ENCODE measurements at regions of chr6 and their contacts with region 1.

Region 1: GRCh38 chr6:30616811-30617564 is at the start of gene PPP1R10:
- DNase-seq: peak; percentile 100
- H3K4me3 Mint-ChIP-seq: peak within 1 kb of the TSS; percentile 83
- H3K27ac Mint-ChIP-seq: peak within 1 kb of the TSS; percentile 99
- H3K4me1 Mint-ChIP-seq: peaks cover 26% of the 10 kb centered on the region
- H3K27me3 Mint-ChIP-seq: no peaks in the 10 kb centered on the region
- CTCF ChIP-seq: no peak
- total RNA-seq, gene PPP1R10: 103 and 209 TPM in 2 replicates

Region 2: GRCh38 chr6:30295837-30296236 is 321.2 kb before region 1 on chr6:
- CTCF ChIA-PET with region 1: no interaction called
- POLR2A ChIA-PET with region 1: no interaction called
- intact Hi-C with region 1: no loop called
- DNase-seq: no peak
- H3K4me3 Mint-ChIP-seq: no peak overlapping the region
- H3K27ac Mint-ChIP-seq: no peak overlapping the region
- H3K4me1 Mint-ChIP-seq: no peaks in the 10 kb centered on the region
- H3K27me3 Mint-ChIP-seq: no peaks in the 10 kb centered on the region
- CTCF ChIP-seq: no peak

Region 3: GRCh38 chr6:30556066-30556905 is 60.7 kb before region 1 on chr6 and contains the start of gene GNL1:
- CTCF ChIA-PET with region 1: interaction called, 3 read pairs
- POLR2A ChIA-PET with region 1: interaction called, 43 read pairs
- intact Hi-C with region 1: no loop called
- DNase-seq: peak; percentile 94
- H3K4me3 Mint-ChIP-seq: peak within 1 kb of the TSS; percentile 91
- H3K27ac Mint-ChIP-seq: peak within 1 kb of the TSS; percentile 99
- H3K4me1 Mint-ChIP-seq: peaks cover 16% of the 10 kb centered on the region
- H3K27me3 Mint-ChIP-seq: no peaks in the 10 kb centered on the region
- CTCF ChIP-seq: no peak
- total RNA-seq, gene GNL1: 69.1 and 76.8 TPM in 2 replicates

Region 4: DNA sequence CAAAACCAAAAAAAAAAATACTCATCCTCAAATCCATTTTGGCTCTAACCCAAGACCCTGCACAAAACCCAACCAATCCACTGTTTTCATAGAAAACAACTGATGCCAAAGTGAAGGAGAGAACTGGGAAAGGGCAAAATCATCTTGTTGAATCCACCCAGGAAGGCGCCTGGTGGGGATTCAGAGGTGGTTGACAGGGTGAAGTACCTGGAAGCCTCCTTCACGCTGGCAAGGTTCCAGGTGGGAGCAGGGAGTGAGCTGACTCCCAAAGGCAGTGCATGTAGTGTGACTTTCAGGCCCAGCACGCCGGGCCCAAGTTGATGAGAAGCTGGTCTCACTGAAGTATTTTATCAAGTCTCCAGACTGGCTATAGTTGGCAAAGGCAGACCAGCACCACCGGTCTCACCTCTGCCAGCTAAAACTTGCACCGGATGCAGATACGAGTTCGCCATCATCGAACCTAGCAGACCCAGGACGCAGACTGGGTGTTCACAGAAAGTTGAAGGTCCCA is 16.5 kb before region 1 on chr6:
- CTCF ChIA-PET with region 1: interaction called, 14 read pairs
- POLR2A ChIA-PET with region 1: interaction called, 107 read pairs
- intact Hi-C with region 1: no loop called
- DNase-seq: peak; percentile 20
- H3K4me3 Mint-ChIP-seq: no peak overlapping the region
- H3K27ac Mint-ChIP-seq: no peak overlapping the region
- H3K4me1 Mint-ChIP-seq: no peaks in the 10 kb centered on the region
- H3K27me3 Mint-ChIP-seq: no peaks in the 10 kb centered on the region
- CTCF ChIP-seq: no peak

Region 5: GRCh38 chr6:30672445-30673253 is 55.7 kb after region 1 on chr6 and contains the start of gene DHX16:
- CTCF ChIA-PET with region 1: interaction called, 4 read pairs
- POLR2A ChIA-PET with region 1: interaction called, 22 read pairs
- intact Hi-C with region 1: loop called (anchors 2 kb)
- DNase-seq: peak; percentile 99
- H3K4me3 Mint-ChIP-seq: peak within 1 kb of the TSS; percentile 83
- H3K27ac Mint-ChIP-seq: peak within 1 kb of the TSS; percentile 52
- H3K4me1 Mint-ChIP-seq: peaks cover 12% of the 10 kb centered on the region
- H3K27me3 Mint-ChIP-seq: no peaks in the 10 kb centered on the region
- CTCF ChIP-seq: peak; percentile 71
- total RNA-seq, gene DHX16: 41.3 and 49.8 TPM in 2 replicates

Region 6: DNA sequence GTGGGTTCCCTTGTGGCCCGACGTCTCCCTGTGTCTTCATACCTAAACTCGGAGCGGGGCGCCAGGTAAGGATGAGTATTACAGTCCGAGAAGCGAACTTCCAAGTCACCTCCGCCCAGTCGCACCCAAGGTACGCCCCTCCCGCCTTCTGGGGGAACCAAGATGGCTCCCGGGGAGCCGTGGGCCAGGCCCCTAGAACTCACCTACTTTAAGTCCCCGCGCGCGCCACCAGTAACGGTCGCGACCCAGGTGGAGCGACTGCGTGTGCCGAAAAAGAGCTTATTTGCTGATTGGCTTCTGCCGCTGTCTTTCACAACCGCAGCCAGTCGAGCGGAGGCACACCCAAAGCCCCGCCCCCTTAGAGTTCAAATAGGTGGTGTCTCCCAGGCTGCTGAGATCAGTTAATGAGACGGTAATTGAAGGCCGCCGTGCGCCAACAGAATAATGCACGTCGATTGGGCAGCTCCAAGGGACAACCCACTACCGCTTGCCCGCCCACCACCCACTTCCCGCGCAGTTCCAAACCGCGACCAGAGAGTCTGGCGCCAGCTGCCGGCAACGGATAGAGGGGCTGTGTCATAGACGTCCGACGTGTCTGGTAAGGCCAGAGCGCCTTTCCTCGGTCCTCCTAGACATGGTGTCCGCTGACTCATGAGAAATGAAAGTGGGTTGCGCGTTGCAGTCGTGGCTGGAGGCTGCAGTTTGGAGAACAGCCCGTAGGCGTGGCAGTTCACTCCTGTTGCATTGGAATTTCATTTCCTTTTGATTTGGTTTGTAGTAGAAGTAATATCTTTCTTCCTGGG is 100.3 kb after region 1 on chr6 and contains the start of gene MDC1:
- CTCF ChIA-PET with region 1: interaction called, 14 read pairs
- POLR2A ChIA-PET with region 1: interaction called, 88 read pairs
- intact Hi-C with region 1: loop called (anchors 2 kb)
- DNase-seq: peak; percentile 100
- H3K4me3 Mint-ChIP-seq: peak within 1 kb of the TSS; percentile 88
- H3K27ac Mint-ChIP-seq: peak within 1 kb of the TSS; percentile 94
- H3K4me1 Mint-ChIP-seq: peaks cover 38% of the 10 kb centered on the region
- H3K27me3 Mint-ChIP-seq: no peaks in the 10 kb centered on the region
- CTCF ChIP-seq: no peak
- total RNA-seq, gene MDC1: 50.6 and 54.5 TPM in 2 replicates

Region 7: DNA sequence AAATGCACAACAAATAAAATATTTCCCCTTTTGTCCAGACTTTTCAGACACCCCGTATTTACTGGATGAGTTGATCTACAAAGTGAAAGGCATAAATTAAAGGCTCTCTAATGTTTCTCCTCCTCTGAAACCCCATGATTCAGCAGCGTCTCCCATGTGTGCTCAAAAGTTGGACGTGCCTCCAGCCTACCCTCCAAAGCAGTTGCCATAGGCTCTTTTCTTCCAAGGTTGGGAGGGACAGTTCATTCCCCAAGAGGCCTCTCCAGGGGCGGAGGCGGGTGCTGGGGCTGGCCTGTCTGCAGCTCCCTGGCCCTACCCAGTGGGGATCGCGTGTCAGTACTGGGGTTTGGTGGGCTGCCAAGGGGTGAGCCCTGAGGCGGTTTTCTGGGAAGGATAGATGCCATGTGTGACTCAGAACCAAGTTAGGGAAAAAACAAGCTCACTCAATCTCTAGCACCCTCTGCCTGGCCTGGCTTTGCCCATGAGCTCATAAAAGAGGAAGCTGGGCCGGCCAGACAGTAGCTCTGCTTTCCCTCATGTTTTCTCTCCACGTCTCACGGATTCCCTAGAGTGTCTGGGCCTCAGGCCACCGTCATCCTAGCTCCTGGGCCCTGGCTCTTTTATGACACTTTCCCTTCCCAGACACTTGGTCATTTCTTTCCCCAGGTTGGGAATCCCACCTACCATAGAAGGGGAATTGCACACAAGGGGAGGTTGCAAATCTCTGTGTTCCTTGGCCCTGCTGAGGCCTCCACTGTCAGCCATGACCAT is 135.4 kb after region 1 on chr6:
- CTCF ChIA-PET with region 1: no interaction called
- POLR2A ChIA-PET with region 1: interaction called, 15 read pairs
- intact Hi-C with region 1: no loop called
- DNase-seq: peak; percentile 100
- H3K4me3 Mint-ChIP-seq: peak overlapping the region; percentile 54
- H3K27ac Mint-ChIP-seq: peak overlapping the region; percentile 94
- H3K4me1 Mint-ChIP-seq: peaks cover 49% of the 10 kb centered on the region
- H3K27me3 Mint-ChIP-seq: no peaks in the 10 kb centered on the region
- CTCF ChIP-seq: no peak

Measured in MCF 10A (cell line).